ENCODE measurements at regions of chr2 and their contacts with region 1.

Region 1: GRCh38 chr2:20015472-20016083 is 3.1 kb upstream of the MATN3 start:
- DNase-seq: peak; percentile 63
- ATAC-seq: no peak
- H3K4me3 ChIP-seq: no peak overlapping the region
- H3K4me3 Mint-ChIP-seq: no peak overlapping the region
- H3K27ac ChIP-seq: no peak overlapping the region
- H3K27ac Mint-ChIP-seq: no peak overlapping the region
- H3K4me1 ChIP-seq: peaks cover 11 to 18% of the 10 kb centered on the region in 2 donors
- H3K4me1 Mint-ChIP-seq: peaks cover 11% of the 10 kb centered on the region
- H3K27me3 ChIP-seq: peaks cover 0 to 33% (median 22%) of the 10 kb centered on the region in 4 experiments
- H3K27me3 Mint-ChIP-seq: peaks cover 42% of the 10 kb centered on the region
- CTCF ChIP-seq: peak; percentile 85

Region 2: DNA sequence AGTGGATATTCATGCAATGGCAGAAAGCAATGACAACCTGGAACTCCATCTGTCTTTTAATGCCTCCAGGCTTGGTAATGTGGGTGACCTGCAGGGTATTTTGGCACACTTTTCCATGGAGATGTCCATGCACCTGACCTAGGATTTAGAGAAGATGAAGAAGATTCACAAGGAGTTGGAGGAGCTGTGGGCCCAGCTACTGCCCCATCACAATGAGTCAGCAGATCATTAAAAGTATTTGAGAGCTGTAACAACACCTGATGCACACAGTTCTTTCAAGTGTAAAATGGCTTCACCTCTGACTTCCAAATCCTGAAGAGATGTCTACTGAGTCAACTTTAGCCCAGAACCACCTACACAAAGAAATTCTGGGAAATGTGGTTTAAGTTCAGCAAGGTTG is 635.0 kb before region 1 on chr2:
- CTCF ChIA-PET with region 1: no interaction called
- POLR2A ChIA-PET with region 1: no interaction called
- intact Hi-C with region 1: no loop called
- DNase-seq: no peak
- ATAC-seq: no peak
- H3K4me3 ChIP-seq: no peak overlapping the region
- H3K4me3 Mint-ChIP-seq: no peak overlapping the region
- H3K27ac ChIP-seq: no peak overlapping the region
- H3K27ac Mint-ChIP-seq: no peak overlapping the region
- H3K4me1 ChIP-seq: no peaks in the 10 kb centered on the region
- H3K4me1 Mint-ChIP-seq: no peaks in the 10 kb centered on the region
- H3K27me3 ChIP-seq: peaks cover 0 to 3% (median under 1%) of the 10 kb centered on the region in 4 experiments
- H3K27me3 Mint-ChIP-seq: peaks cover 27% of the 10 kb centered on the region
- CTCF ChIP-seq: no peak

Region 3: GRCh38 chr2:19786408-19787058 is 229.0 kb before region 1 on chr2:
- CTCF ChIA-PET with region 1: no interaction called
- POLR2A ChIA-PET with region 1: no interaction called
- intact Hi-C with region 1: no loop called
- DNase-seq: no peak
- ATAC-seq: no peak
- H3K4me3 ChIP-seq: no peak overlapping the region
- H3K4me3 Mint-ChIP-seq: no peak overlapping the region
- H3K27ac ChIP-seq: no peak overlapping the region
- H3K27ac Mint-ChIP-seq: no peak overlapping the region
- H3K4me1 ChIP-seq: no peaks in the 10 kb centered on the region
- H3K4me1 Mint-ChIP-seq: no peaks in the 10 kb centered on the region
- H3K27me3 ChIP-seq: no peaks in the 10 kb centered on the region
- H3K27me3 Mint-ChIP-seq: peaks cover 12% of the 10 kb centered on the region
- CTCF ChIP-seq: no peak

Region 4: DNA sequence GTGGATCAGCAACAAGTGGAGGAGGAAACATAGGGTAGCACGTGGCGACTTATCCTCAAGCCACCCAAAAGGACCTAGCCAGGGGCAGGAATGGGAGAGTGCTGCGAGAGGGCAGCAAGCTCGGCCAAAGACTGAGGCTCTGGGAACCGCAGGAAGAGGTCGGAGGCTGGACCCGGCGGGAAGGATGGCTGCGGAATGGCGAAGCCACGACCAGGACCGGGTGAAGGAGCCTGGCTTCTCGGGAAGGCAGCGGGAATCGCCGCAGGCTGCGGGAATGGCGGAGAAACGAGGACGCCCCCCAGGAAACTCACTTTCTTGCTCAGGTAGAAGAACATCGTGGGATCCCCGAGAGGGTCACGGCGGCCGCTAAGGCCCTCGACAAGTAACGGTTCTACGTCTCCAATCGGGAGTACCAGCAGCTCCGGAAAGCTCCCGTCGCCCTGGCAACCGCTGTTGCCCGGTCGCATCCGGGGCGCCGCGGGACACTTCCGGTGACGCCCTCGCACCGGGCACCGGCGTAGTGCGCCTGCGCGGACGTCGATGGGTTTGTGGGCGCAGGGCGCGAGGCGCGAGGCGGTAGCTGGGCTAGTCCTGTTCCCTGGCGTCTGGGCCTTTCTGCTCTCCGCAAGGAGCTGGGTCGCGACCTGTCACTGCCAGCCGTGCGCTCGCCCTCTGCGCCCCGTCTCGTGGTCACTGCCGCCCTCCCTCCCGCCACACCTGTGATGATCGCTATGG is 25.7 kb before region 1 on chr2 and contains the start of gene WDR35:
- CTCF ChIA-PET with region 1: interaction called, 5 read pairs
- POLR2A ChIA-PET with region 1: no interaction called
- intact Hi-C with region 1: loop called (anchors 2 kb)
- DNase-seq: peak; percentile 92
- ATAC-seq: peak; percentile 88
- H3K4me3 ChIP-seq: peak within 1 kb of the TSS; percentile 68 to 93 (median 88)
- H3K4me3 Mint-ChIP-seq: peak within 1 kb of the TSS; percentile 91
- H3K27ac ChIP-seq: peak within 1 kb of the TSS; percentile 69 to 77
- H3K27ac Mint-ChIP-seq: peak within 1 kb of the TSS; percentile 89
- H3K4me1 ChIP-seq: peaks cover 16 to 22% of the 10 kb centered on the region in 2 donors
- H3K4me1 Mint-ChIP-seq: peaks cover 28% of the 10 kb centered on the region
- H3K27me3 ChIP-seq: peaks cover 0 to 7% (median 2%) of the 10 kb centered on the region in 4 experiments
- H3K27me3 Mint-ChIP-seq: peaks cover 21% of the 10 kb centered on the region
- CTCF ChIP-seq: no peak
- total RNA-seq, gene WDR35: 9.4 and 11.8 TPM in 2 replicates

Region 5: DNA sequence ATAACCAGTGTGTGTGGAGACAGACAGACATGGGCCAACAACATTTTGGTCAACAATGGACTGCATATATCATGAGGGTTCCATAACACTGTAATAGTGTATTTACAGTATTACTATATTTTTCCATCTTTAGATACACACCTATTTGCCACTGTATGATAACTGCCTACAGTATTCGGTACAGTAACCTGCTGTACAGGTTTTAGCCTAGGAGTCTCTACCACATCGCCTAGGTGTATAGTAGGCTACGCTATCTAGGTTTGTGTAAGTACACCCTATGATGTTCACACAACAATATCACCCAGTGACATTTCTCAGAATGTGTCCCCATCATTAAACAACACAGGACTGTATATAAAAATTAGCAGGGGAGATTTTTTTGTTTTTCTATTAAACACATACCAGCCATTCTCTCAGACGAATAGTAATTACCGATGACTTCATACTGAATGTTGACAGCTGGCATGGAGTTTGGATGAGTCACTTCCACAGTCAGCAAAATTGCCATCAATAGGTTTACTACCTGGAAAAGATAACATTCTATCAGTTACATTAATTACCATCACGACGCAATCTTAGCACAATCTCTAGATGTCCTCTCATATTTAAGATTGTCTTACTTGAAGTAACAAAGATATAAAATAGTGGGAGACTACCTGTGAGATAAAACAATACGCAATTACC is 25.1 kb after region 1 on chr2:
- CTCF ChIA-PET with region 1: interaction called, 28 read pairs
- POLR2A ChIA-PET with region 1: no interaction called
- intact Hi-C with region 1: no loop called
- DNase-seq: no peak
- ATAC-seq: no peak
- H3K4me3 ChIP-seq: no peak overlapping the region
- H3K4me3 Mint-ChIP-seq: no peak overlapping the region
- H3K27ac ChIP-seq: no peak overlapping the region
- H3K27ac Mint-ChIP-seq: no peak overlapping the region
- H3K4me1 ChIP-seq: peaks cover 14 to 15% of the 10 kb centered on the region in 2 donors
- H3K4me1 Mint-ChIP-seq: peaks cover 52% of the 10 kb centered on the region
- H3K27me3 ChIP-seq: no peaks in the 10 kb centered on the region
- H3K27me3 Mint-ChIP-seq: no peaks in the 10 kb centered on the region
- CTCF ChIP-seq: no peak

Region 6: DNA sequence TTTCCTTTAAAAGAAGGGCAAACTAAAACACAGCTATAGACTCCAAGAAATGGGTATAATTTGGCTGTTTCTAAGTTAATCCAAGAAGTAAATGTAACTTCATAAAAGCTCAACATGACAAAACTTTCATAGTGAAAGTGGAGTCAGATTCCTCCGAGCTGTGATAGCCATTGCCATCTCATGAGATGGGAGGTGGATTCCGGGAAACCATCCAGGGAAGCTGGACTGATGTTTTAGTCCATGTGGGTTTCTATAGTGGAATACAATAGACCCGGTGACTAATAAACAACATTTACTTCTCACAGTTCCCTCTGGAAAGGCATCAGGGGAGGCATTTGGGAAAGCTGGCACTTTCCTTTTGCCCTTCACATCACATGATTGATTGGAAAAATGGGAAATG is 45.9 kb after region 1 on chr2:
- CTCF ChIA-PET with region 1: interaction called, 10 read pairs
- POLR2A ChIA-PET with region 1: no interaction called
- intact Hi-C with region 1: no loop called
- DNase-seq: no peak
- ATAC-seq: no peak
- H3K4me3 ChIP-seq: no peak overlapping the region
- H3K4me3 Mint-ChIP-seq: no peak overlapping the region
- H3K27ac ChIP-seq: no peak overlapping the region
- H3K27ac Mint-ChIP-seq: no peak overlapping the region
- H3K4me1 ChIP-seq: no peaks in the 10 kb centered on the region
- H3K4me1 Mint-ChIP-seq: no peaks in the 10 kb centered on the region
- H3K27me3 ChIP-seq: no peaks in the 10 kb centered on the region
- H3K27me3 Mint-ChIP-seq: peaks cover 31% of the 10 kb centered on the region
- CTCF ChIP-seq: no peak

Region 7: GRCh38 chr2:20097879-20098714 is 82.5 kb after region 1 on chr2:
- CTCF ChIA-PET with region 1: interaction called, 73 read pairs
- POLR2A ChIA-PET with region 1: no interaction called
- intact Hi-C with region 1: no loop called
- DNase-seq: peak; percentile 83
- ATAC-seq: peak; percentile 94
- H3K4me3 ChIP-seq: no peak overlapping the region
- H3K4me3 Mint-ChIP-seq: no peak overlapping the region
- H3K27ac ChIP-seq: no peak overlapping the region
- H3K27ac Mint-ChIP-seq: no peak overlapping the region
- H3K4me1 ChIP-seq: no peaks in the 10 kb centered on the region
- H3K4me1 Mint-ChIP-seq: peaks cover 1% of the 10 kb centered on the region
- H3K27me3 ChIP-seq: peaks cover 0 to 3% (median 0%) of the 10 kb centered on the region in 4 experiments
- H3K27me3 Mint-ChIP-seq: peaks cover 34% of the 10 kb centered on the region
- CTCF ChIP-seq: peak; percentile 95

Measured in B cell (primary cell).